SK-N-SH (cell line): ENCODE measurements at regions of chr2 and their contacts with region 1.

Region 1: GRCh38 chr2:176814306-176815052 is 398.1 kb upstream of the HNRNPA3 start:
- DNase-seq: peak; percentile 31
- H3K4me3 ChIP-seq: no peak overlapping the region
- H3K27ac ChIP-seq: no peak overlapping the region
- H3K4me1 ChIP-seq: peaks cover 2 to 5% of the 10 kb centered on the region in 2 experiments; a peak in 2 of 4 replicates
- H3K27me3 ChIP-seq: no peaks in the 10 kb centered on the region
- CTCF ChIP-seq: peak; percentile 63
- EP300 ChIP-seq: no peak
- RAD21 ChIP-seq: peak; percentile 78

Region 2: GRCh38 chr2:176110975-176111663 is 703.4 kb before region 1 on chr2:
- CTCF ChIA-PET with region 1: interaction called, 17 read pairs
- POLR2A ChIA-PET with region 1: no interaction called
- DNase-seq: peak; percentile 88
- H3K4me3 ChIP-seq: peak overlapping the region in 1 of 2 experiments; percentile 19; a peak in 1 of 4 replicates
- H3K27ac ChIP-seq: no peak overlapping the region
- H3K4me1 ChIP-seq: peaks cover 0 to 4% of the 10 kb centered on the region in 2 experiments; a peak in 2 of 4 replicates
- H3K27me3 ChIP-seq: peaks cover 70% of the 10 kb centered on the region
- CTCF ChIP-seq: peak; percentile 90
- EP300 ChIP-seq: no peak
- RAD21 ChIP-seq: peak; percentile 65

Region 3: DNA sequence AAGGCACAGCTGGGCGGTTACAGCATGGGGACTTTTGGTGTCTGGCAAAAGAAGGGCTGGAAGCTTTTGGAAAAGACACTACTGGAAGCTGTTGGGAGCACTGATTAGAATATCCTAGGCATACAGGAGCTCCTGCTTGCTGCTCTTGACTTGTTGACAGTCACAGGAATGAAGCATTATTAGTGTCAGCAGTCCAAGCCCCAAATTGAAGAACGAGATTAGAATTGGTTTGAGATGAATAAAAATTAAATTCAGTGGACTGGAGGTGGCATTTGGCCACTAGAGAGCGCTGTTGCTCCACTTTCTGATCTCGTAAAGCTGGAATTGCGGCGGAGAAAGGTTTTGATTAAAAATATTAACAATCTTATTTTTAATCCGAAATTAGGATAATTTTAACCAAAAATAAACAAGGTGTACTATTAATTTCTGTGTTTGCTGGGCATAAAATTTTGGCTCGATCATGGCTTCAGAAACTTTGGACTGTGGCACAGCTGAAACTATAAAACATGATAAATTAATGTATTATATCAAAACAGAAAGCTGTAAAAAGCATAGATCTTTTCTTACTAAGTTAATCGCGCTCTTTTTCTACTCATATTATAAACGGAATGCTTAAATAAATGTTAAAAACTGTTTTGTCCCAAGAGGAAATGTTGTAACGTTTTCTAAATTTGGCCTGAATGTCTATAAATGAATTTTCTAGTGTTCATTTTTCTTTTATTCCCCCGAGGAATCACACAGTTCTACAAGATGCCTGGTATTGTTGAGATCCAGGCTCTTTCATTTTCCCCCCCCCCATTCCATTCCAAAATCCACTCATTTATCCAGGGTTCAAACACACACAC is 687.3 kb before region 1 on chr2:
- CTCF ChIA-PET with region 1: interaction called, 42 read pairs
- POLR2A ChIA-PET with region 1: no interaction called
- DNase-seq: peak; percentile 63
- H3K4me3 ChIP-seq: peak overlapping the region; percentile 19 to 25; a peak in 1 of 4 replicates
- H3K27ac ChIP-seq: no peak overlapping the region; a peak in 1 of 4 replicates
- H3K4me1 ChIP-seq: peaks cover 4 to 20% of the 10 kb centered on the region in 2 experiments; a peak in 3 of 4 replicates
- H3K27me3 ChIP-seq: no peaks in the 10 kb centered on the region; the same call in 1 of the 2 replicates
- CTCF ChIP-seq: peak; percentile 97
- EP300 ChIP-seq: no peak; a peak in 1 of 4 replicates
- RAD21 ChIP-seq: peak; percentile 94

Region 4: DNA sequence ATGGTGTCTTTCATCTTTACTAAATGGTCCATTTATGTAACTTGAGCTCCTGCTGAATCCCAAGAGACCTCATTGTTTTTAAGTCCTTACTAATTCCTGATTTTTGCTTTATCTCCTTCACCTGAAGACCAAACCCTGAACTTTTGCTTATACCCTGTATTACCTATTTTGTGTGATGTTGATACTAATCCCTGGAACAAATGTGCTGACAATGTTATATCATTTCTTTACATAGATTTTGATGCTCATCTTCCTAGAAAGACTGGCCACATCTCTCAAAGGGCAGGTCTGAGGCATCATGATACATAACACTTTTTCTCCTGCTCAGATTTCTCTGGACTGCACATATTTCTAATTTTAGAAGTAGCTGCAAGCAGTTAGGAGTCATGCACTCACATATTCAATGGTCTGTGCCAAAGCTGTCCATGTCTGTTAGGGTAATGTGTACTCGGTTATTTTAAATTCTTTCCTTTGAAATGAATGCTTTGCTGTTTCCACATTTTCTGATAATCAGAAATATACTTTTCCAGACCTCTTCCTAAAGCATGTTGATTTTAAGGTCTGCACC is 29.8 kb before region 1 on chr2:
- CTCF ChIA-PET with region 1: interaction called, 12 read pairs
- POLR2A ChIA-PET with region 1: no interaction called
- DNase-seq: no peak
- H3K4me3 ChIP-seq: no peak overlapping the region
- H3K27ac ChIP-seq: peak overlapping the region in 1 of 2 experiments; percentile 28; a peak in 1 of 4 replicates
- H3K4me1 ChIP-seq: no peaks in the 10 kb centered on the region; a peak in 2 of 4 replicates
- H3K27me3 ChIP-seq: no peaks in the 10 kb centered on the region
- CTCF ChIP-seq: no peak
- EP300 ChIP-seq: no peak
- RAD21 ChIP-seq: no peak

Region 5: DNA sequence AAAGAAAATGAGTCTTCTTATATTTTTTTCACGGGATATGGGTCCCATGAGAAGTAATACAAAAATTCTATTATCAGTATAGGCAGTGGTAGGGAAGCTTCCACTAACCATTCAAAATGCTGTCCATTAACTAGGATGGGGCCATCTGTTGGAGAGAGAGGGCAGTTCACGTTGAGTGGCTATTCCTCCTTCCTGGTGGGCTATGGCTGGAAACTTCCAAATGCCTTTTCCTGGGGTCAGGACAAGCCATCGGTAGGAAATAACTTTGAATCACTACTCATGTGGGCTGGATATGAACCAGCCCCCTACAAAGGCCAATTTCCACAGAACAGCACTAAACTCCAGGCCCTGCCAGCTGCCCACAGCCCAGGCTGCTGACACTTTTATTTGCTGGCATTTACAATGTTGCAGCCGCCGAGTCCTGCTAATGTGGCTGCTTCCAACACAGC is 242.0 kb after region 1 on chr2:
- CTCF ChIA-PET with region 1: interaction called, 19 read pairs
- POLR2A ChIA-PET with region 1: no interaction called
- DNase-seq: peak; percentile 53
- H3K4me3 ChIP-seq: no peak overlapping the region
- H3K27ac ChIP-seq: no peak overlapping the region
- H3K4me1 ChIP-seq: peaks cover 0 to 5% of the 10 kb centered on the region in 2 experiments; a peak in 2 of 4 replicates
- H3K27me3 ChIP-seq: no peaks in the 10 kb centered on the region
- CTCF ChIP-seq: peak; percentile 32; the same call in 1 of the 2 replicates
- EP300 ChIP-seq: no peak
- RAD21 ChIP-seq: peak; percentile 62

Region 6: DNA sequence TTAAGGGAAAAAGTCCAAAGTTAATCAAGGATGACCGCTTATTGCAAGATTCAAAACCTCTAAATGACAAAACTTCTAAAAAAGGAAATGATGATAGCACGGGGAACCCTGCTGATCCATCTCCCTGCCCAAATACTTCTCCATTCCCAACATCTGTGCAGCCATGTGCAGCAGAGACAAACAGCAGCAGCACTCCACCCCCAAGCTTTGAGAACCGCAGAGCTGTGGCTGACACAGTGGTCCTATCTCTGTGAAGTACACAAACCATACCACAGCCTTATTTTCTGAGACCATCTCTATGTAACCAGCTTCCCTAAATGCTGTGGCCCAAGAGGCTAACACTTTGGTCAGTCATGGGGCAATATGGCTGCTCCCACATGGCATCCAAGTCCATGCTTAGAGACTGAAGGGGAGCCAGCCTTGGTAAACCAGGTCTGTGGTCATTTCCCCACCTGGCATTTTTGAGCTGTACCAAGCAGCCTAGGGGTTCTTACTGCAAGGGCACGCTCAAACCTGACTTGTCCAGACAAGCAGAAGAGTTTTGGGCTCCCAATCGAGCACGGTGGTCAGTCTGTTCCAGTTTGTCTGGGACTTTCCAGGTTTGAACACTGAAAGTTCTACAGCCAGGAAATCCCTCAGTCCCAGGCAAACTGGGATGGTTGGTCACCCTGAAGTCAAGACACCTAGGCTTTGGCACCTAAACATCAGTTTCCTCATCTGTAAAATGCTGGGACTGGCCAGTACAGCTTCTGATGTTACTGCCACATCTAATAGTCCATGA is 467.1 kb after region 1 on chr2:
- CTCF ChIA-PET with region 1: no interaction called
- POLR2A ChIA-PET with region 1: no interaction called
- DNase-seq: no peak
- H3K4me3 ChIP-seq: no peak overlapping the region
- H3K27ac ChIP-seq: no peak overlapping the region
- H3K4me1 ChIP-seq: peaks cover 4 to 14% of the 10 kb centered on the region in 2 experiments; a peak in 2 of 4 replicates
- H3K27me3 ChIP-seq: no peaks in the 10 kb centered on the region
- CTCF ChIP-seq: no peak
- EP300 ChIP-seq: no peak
- RAD21 ChIP-seq: no peak